Cardiac septum (tissue), 1 donor: ENCODE measurements at regions of chr7 and their contacts with region 1.

Region 1: DNA sequence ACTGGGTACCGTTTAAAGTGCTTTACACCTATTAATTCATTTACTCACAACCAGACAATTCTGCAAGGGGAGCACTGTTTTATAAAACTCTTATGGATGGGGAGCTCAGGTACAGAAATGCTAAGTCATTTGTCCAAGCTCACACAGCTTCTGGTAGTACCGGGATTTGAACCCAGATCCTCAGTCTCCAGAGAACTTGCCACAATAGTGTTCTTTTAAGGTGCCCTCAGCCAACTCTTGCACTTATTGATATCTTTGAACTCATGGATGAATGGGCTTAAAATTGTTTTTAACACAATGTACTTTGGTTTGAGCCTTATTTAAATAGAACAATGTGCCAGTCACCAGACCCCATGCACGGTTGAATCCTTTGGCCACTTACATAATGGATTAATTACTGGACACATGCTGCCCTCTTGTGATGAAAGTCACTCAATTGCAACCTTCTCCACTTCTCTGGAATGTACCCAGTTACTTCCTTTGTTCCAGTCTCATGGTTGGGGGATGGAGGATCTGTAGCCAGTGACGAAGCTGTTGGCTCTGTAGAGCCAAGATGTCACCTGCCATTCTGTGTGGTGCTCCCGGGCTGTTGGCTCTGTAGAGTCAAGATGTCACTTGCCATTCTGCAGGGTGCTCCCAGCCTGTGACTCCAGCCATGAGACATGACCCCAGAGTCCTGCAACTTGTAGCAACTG is 65.6 kb downstream of the NOD1 start:
- DNase-seq: no peak

Region 2: DNA sequence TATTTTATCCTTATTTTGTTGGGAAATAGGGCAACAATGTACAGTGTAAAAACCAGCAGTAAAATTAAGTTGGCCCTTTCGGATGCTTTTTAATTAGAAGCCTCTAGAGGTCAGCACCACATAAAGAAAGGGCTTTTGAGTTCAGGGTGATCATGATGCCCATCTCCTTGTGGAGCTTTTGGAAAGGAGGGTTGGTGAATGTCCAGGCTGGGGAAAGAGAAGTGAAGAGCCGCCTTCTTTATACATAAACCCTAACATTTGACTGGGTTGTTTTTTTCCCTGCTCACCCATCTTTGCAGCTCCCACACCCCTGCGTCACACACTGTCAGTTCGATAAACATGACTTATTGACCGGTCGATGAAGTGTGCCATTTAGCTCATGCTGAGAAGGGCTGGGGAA is 248.4 kb before region 1 on chr7:
- intact Hi-C with region 1: loop called (anchors 10 kb)
- DNase-seq: no peak

Region 3: GRCh38 chr7:30276203-30276900 is 136.6 kb before region 1 on chr7:
- intact Hi-C with region 1: loop called (anchors 2 kb)
- DNase-seq: no peak

Region 4: GRCh38 chr7:30612658-30613265 is 199.8 kb after region 1 on chr7:
- intact Hi-C with region 1: no loop called
- DNase-seq: no peak

Region 5: DNA sequence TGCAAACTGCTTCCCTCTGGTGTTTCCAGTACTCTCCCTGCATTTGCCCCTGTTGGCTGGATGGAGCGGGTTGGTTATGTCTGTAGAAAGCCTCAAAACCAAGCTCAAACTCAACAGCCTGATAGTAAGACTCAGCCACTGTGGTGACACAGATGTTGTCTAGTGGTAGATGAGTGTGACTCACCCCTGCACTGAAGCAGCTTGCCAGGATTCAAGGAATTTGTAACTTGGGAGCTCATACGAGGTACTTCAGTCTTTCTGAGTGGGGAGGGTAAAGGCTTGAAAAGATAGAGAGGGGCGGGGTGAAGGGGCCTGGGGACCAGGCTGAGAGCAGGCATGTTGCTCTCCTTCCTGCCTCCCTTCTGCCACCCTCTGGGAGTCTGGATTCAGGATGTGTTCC is 475.8 kb after region 1 on chr7:
- intact Hi-C with region 1: no loop called
- DNase-seq: no peak